Dendritic cell treated with granulocyte-macrophage colony-stimulating factor and Interleukin-4, amounts not matched to agents 40 ng/mL and 50 ng/mL, for 4 days (primary cell): ENCODE measurements at regions of chr1 and their contacts with region 1.

Region 1: GRCh38 chr1:201792534-201793305 is 36.2 kb upstream of the IPO9 start:
- H3K4me3 Mint-ChIP-seq: no peak overlapping the region
- H3K27ac Mint-ChIP-seq: peak overlapping the region; percentile 68
- H3K4me1 Mint-ChIP-seq: peaks cover 36% of the 10 kb centered on the region
- H3K27me3 Mint-ChIP-seq: no peaks in the 10 kb centered on the region

Region 2: GRCh38 chr1:201538612-201539551 is 253.8 kb before region 1 on chr1 and contains the start of gene NAV1:
- intact Hi-C with region 1: loop called (anchors 5 kb)
- H3K4me3 Mint-ChIP-seq: peak within 1 kb of the TSS; percentile 66
- H3K27ac Mint-ChIP-seq: peak within 1 kb of the TSS; percentile 62
- H3K4me1 Mint-ChIP-seq: peaks cover 85% of the 10 kb centered on the region
- H3K27me3 Mint-ChIP-seq: peaks cover 23% of the 10 kb centered on the region

Region 3: GRCh38 chr1:201559679-201560162 is 233.0 kb before region 1 on chr1:
- intact Hi-C with region 1: loop called (anchors 1 kb)
- H3K4me3 Mint-ChIP-seq: no peak overlapping the region
- H3K27ac Mint-ChIP-seq: no peak overlapping the region
- H3K4me1 Mint-ChIP-seq: peaks cover 21% of the 10 kb centered on the region
- H3K27me3 Mint-ChIP-seq: peaks cover 6% of the 10 kb centered on the region

Region 4: DNA sequence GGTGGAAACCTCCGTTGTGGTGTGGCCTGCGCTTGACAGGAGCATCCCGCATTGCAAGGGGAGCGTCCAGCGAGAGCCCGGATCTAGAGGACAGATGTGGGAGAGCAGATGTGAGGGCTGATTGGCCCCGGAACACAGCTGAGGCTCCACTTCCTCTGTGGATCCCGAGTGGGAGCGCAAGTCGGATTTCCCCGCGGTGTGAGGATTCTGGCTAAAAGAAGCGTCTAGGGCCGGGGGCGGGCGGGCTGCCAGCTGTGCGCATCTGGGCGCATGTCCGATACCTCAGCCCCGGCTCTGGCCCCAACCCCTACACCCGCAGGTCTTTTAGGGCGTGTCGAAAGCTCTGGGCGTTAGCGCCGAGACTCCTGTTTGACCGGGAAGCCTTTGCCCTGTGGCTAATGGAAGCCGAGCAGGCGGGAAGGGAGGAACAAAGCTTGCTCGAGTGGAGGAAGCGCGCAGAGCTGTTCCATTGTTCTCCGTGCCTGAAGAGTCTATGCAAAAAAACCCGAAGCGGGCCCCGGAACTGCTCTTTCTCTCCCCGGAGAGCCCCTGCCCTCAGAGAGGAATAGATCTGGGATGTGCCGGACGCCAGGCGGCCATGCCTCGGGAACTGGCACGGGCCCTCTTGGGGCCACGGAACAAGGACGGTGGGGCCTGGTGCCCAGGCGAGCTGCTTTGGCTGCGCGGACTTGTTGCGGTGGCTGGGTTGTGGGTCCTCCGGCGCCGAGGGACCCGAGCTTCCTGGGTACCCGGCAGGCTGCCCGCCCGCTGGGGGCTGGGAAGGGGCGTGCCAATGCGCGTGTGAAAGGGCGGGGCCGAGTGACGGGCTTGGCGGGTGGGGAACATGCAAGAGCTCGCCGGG is 142.7 kb before region 1 on chr1:
- intact Hi-C with region 1: no loop called
- H3K4me3 Mint-ChIP-seq: peak overlapping the region; percentile 63
- H3K27ac Mint-ChIP-seq: peak overlapping the region; percentile 42
- H3K4me1 Mint-ChIP-seq: peaks cover 18% of the 10 kb centered on the region
- H3K27me3 Mint-ChIP-seq: peaks cover 51% of the 10 kb centered on the region

Region 5: DNA sequence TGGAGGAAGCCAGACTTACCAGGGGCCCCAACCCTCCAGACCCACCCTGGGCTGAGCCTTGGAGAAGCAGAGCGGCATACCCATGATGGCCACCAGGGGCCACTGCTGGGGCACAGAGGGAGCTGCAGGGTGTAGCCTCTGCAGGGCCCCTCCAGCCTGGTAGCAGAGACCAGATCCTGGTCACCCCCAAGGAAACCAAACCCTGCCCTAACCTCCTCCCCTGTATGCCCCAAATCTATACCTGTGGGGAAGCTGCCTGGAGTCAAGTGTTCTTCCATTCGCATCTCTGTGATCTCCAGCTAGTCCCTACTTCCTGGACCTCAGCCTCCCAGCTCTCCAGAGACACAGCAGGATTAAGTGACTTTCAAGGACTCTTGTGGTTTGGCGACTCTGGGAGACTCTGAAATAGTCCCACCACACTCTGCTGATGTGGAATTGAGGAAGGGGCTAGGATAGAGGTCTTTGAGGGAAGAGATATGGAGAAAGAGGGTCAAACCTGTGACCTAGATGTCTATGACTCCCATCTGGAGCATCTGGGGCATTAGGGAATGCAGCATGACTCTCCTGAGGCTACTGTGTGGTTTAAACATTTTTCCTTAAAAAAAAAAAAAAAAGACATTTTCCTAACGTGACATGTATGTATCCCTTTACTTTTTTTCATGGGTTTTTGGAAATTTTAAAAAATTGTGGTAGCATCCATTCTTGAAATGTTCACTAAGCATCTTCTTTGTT is 83.0 kb before region 1 on chr1:
- intact Hi-C with region 1: loop called (anchors 1 kb)
- H3K4me3 Mint-ChIP-seq: no peak overlapping the region
- H3K27ac Mint-ChIP-seq: no peak overlapping the region
- H3K4me1 Mint-ChIP-seq: peaks cover 48% of the 10 kb centered on the region
- H3K27me3 Mint-ChIP-seq: peaks cover 2% of the 10 kb centered on the region

Region 6: DNA sequence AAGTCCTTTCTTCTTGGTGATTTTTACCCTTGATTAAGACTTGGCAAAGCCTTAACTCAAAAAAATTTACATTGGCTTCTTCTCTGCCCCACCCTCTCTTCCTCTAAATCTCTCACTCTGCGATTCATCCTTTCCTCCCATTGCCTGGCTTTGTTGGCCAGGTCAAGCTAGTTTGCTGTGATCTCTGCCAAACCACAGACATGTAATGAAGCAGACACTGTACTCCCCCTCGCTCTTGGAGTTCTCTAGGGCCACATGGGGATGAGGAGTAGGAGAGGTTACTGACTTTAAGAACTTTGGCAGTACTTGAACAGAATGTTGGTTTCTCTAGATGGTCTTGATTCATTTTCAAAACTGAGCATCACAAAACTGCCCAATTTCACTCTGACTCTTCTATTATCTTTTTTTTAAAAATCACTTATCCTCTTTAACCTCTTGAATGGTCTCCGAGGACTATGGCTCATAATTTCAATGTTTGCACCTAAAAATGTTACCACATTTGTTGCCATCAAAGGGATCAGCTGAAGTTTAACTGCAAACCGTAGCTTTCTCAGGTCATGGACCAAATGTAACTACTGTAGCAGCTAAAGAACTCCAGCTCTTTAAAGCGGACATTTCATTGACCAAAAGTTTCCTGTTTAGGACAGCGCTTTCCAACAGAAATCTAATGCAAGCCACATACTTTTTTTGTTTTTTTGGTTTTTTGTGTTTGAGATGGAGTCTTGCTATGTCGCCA is 26.4 kb before region 1 on chr1:
- intact Hi-C with region 1: no loop called
- H3K4me3 Mint-ChIP-seq: no peak overlapping the region
- H3K27ac Mint-ChIP-seq: no peak overlapping the region
- H3K4me1 Mint-ChIP-seq: peaks cover 6% of the 10 kb centered on the region
- H3K27me3 Mint-ChIP-seq: no peaks in the 10 kb centered on the region